Activated B cell treated with CpG ODN at 0.5 μM for 24 hours (primary cell): ENCODE measurements at regions of chr10 and their contacts with region 1.

Region 1: DNA sequence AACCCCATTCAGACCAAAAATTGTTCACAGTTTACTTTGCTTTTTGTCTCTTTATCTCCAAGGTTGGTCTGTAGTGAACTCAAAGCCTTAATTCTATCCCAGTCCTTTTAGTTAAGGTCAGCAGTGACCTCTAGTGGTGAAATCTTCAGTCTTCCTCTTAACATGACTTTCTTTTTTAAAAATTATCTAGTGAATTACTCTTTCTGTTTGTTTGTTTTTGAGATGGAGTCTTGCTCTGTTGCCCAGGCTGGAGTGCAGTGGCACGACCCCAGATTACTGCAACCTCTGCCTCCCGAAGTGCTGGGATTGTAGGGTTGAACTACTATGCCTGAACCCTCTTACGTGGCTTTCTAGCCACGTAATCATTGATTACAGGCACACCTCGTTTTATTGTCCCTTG is 25.0 kb downstream of the ZNF487 start:
- DNase-seq: no peak
- ATAC-seq: peak; percentile 62
- H3K4me3 Mint-ChIP-seq: no peak overlapping the region
- H3K27ac Mint-ChIP-seq: no peak overlapping the region
- H3K4me1 Mint-ChIP-seq: peaks cover 4% of the 10 kb centered on the region
- H3K27me3 Mint-ChIP-seq: no peaks in the 10 kb centered on the region
- CTCF ChIP-seq: peak; percentile 36

Region 2: GRCh38 chr10:42753126-42753506 is 708.8 kb before region 1 on chr10:
- CTCF ChIA-PET with region 1: no interaction called
- POLR2A ChIA-PET with region 1: no interaction called
- intact Hi-C with region 1: loop called (anchors 5 kb)
- DNase-seq: peak; percentile 46
- ATAC-seq: peak; percentile 45
- H3K4me3 Mint-ChIP-seq: peak overlapping the region; percentile 83
- H3K27ac Mint-ChIP-seq: no peak overlapping the region
- H3K4me1 Mint-ChIP-seq: peaks cover 14% of the 10 kb centered on the region
- H3K27me3 Mint-ChIP-seq: peaks cover 56% of the 10 kb centered on the region
- CTCF ChIP-seq: no peak

Region 3: GRCh38 chr10:43105102-43105785 is 356.7 kb before region 1 on chr10:
- CTCF ChIA-PET with region 1: no interaction called
- POLR2A ChIA-PET with region 1: no interaction called
- intact Hi-C with region 1: loop called (anchors 2 kb)
- DNase-seq: peak; percentile 82
- ATAC-seq: peak; percentile 95
- H3K4me3 Mint-ChIP-seq: peak overlapping the region; percentile 83
- H3K27ac Mint-ChIP-seq: no peak overlapping the region
- H3K4me1 Mint-ChIP-seq: peaks cover 16% of the 10 kb centered on the region
- H3K27me3 Mint-ChIP-seq: peaks cover 22% of the 10 kb centered on the region
- CTCF ChIP-seq: peak; percentile 97

Region 4: DNA sequence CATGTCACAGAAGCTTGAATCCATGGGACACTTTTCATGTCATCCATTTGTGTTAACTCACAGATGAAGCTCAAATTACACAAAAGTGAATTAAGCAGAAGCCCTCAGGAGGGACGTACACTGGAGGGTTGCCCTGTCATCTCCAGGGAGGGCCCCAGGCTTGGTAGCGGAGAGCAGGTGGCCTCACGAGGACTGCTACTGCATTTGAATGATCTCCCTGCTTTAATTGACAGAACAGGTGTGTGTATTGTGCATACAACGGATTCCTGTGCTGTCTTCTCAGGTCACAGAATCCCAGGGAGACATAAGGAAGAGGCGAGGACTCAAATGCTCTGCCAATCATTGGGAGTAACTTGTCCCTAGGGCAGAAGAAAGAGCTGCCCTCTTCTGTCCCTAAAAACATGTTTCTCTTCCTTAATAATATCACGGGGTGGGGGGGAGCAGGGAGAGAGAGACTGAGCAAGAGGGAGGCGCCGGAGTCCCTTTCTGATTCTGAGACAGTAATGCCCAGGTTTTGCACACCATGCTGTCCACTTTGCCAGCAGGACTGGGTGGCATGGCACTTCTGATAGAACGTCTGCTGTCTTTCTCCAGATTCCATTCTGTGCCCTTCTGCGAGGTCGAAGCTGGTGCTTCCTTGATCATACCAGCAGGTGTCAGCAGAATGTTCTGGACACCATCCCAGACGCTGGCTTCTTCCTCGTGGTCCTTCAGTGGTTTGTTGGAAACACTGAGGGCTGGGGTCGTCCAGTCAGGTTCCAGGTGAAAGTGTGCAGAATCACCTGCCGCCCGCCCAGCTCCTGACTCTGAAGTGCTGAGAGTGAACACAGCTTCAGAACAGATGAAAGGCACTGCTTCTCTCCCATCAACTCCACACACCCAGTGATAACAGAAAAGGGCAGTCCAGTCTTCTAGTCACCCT is 168.9 kb before region 1 on chr10:
- CTCF ChIA-PET with region 1: interaction called, 4 read pairs
- POLR2A ChIA-PET with region 1: interaction called, 10 read pairs
- intact Hi-C with region 1: loop called (anchors 1 kb)
- DNase-seq: no peak
- ATAC-seq: peak; percentile 66
- H3K4me3 Mint-ChIP-seq: no peak overlapping the region
- H3K27ac Mint-ChIP-seq: no peak overlapping the region
- H3K4me1 Mint-ChIP-seq: peaks cover 6% of the 10 kb centered on the region
- H3K27me3 Mint-ChIP-seq: peaks cover 7% of the 10 kb centered on the region
- CTCF ChIP-seq: no peak

Region 5: GRCh38 chr10:43348511-43349312 is 113.2 kb before region 1 on chr10:
- CTCF ChIA-PET with region 1: no interaction called
- POLR2A ChIA-PET with region 1: no interaction called
- intact Hi-C with region 1: loop called (anchors 1 kb)
- DNase-seq: peak; percentile 59
- ATAC-seq: peak; percentile 100
- H3K4me3 Mint-ChIP-seq: no peak overlapping the region
- H3K27ac Mint-ChIP-seq: no peak overlapping the region
- H3K4me1 Mint-ChIP-seq: peaks cover 8% of the 10 kb centered on the region
- H3K27me3 Mint-ChIP-seq: peaks cover 13% of the 10 kb centered on the region
- CTCF ChIP-seq: no peak

Region 6: GRCh38 chr10:43436400-43437140 is 25.4 kb before region 1 on chr10 and contains the start of gene ZNF487:
- CTCF ChIA-PET with region 1: no interaction called
- POLR2A ChIA-PET with region 1: no interaction called
- intact Hi-C with region 1: no loop called
- DNase-seq: peak; percentile 97
- ATAC-seq: peak; percentile 90
- H3K4me3 Mint-ChIP-seq: peak within 1 kb of the TSS; percentile 91
- H3K27ac Mint-ChIP-seq: peak within 1 kb of the TSS; percentile 95
- H3K4me1 Mint-ChIP-seq: peaks cover 34% of the 10 kb centered on the region
- H3K27me3 Mint-ChIP-seq: no peaks in the 10 kb centered on the region
- CTCF ChIP-seq: no peak
- total RNA-seq, gene ZNF487: 2.9 and 3.4 TPM in 2 replicates

Region 7: DNA sequence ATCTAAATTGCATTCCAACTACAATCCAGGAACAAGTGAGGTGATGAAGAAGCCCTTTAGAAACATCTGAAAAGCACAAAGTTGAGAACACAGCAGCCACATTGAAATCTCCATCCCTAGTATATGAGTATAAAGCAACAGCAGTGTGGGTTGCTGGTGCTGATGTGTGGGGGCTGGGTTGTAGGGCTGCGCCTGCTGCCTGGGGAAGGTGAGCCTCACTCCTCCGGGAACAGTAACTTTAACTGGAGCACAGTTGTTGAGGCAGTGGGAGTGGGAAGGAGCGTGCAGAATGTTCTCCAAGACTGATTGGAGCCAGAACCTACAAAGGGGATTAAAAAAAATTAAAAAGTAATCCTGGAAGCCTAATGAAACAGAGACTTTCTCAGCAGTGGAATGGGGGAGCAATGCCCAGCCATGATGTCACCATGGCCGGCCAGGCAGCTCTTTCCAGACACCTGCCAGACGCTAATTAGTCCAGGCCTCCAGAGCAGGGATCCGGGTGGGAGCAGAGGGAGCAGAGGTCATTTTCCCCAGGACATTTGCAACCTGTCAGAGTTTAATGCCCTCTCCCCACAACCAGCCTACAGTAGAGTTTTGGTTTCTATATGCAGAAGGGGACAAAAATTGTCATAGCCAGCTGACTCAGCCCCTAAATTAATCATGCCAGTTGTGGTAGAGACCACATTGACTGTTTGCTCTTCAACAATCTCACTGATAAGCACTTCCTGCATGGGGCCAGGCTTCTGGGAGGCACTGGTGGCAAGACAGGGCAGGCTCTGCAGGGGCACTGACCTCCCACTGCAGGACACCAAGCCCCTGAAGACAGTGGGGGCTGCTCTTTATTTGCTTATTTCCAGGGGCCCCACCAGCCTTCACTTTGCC is 319.8 kb after region 1 on chr10:
- CTCF ChIA-PET with region 1: no interaction called
- POLR2A ChIA-PET with region 1: no interaction called
- intact Hi-C with region 1: no loop called
- DNase-seq: no peak
- ATAC-seq: no peak
- H3K4me3 Mint-ChIP-seq: no peak overlapping the region
- H3K27ac Mint-ChIP-seq: no peak overlapping the region
- H3K4me1 Mint-ChIP-seq: no peaks in the 10 kb centered on the region
- H3K27me3 Mint-ChIP-seq: peaks cover 3% of the 10 kb centered on the region
- CTCF ChIP-seq: no peak